T-cell (primary cell): ENCODE measurements at regions of chr5 and their contacts with region 1.

Region 1: GRCh38 chr5:76582230-76583162 is 40.7 kb downstream of the F2RL2 start:
- DNase-seq: no peak
- ATAC-seq: no peak
- H3K4me3 ChIP-seq: no peak overlapping the region
- H3K4me3 Mint-ChIP-seq: no peak overlapping the region
- H3K27ac ChIP-seq: no peak overlapping the region
- H3K27ac Mint-ChIP-seq: peak overlapping the region in 1 of 2 donors; percentile 53
- H3K4me1 ChIP-seq: peaks cover 0 to 2% of the 10 kb centered on the region in 2 experiments
- H3K4me1 Mint-ChIP-seq: peaks cover 0 to 31% (median 27%) of the 10 kb centered on the region in 3 donors
- H3K27me3 ChIP-seq: no peaks in the 10 kb centered on the region
- H3K27me3 Mint-ChIP-seq: no peaks in the 10 kb centered on the region

Region 2: DNA sequence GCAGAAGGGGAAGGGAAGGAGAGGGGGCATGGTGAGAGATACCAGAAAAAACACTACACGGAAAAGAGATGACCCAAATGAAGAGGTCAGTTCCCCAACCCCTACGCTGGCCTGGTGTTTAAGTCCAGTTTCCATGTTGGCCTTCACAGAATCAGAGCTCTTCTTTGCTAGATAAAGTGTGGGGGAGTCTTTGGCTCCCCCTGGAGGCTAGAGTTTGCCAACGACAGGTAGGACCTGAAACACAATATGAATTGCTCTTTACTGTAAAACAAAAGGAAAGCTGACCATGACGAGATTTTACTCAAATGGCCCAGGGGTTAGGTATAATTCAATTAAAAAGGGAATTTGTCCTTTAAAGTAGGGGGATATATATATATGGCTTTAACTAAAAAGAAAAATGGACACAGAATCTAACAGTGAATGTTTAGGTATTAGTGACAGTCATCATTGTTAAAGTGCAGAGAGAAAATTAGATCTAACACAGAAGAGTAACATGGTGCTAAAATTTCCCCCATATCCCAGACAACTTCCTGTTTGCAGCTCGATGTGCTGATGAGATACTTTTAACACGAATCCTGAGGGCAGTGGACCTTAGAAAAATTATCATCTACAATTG is 407.3 kb before region 1 on chr5:
- CTCF ChIA-PET with region 1: interaction called in 1 of 2 experiments, 11 read pairs
- POLR2A ChIA-PET with region 1: no interaction called
- DNase-seq: peak in 33 of 35 experiments; percentile 5 to 71 (median 35)
- ATAC-seq: peak in 3 of 4 experiments; percentile 40 to 67 (median 47)
- H3K4me3 ChIP-seq: no peak overlapping the region
- H3K4me3 Mint-ChIP-seq: peak overlapping the region; percentile 24 to 35 (median 34)
- H3K27ac ChIP-seq: peak overlapping the region; percentile 50
- H3K27ac Mint-ChIP-seq: peak overlapping the region; percentile 23 to 83
- H3K4me1 ChIP-seq: peaks cover 9 to 18% of the 10 kb centered on the region in 2 experiments
- H3K4me1 Mint-ChIP-seq: peaks cover 19 to 28% (median 20%) of the 10 kb centered on the region in 3 donors
- H3K27me3 ChIP-seq: no peaks in the 10 kb centered on the region
- H3K27me3 Mint-ChIP-seq: no peaks in the 10 kb centered on the region